OCI-LY7 (cell line): ENCODE measurements at regions of chr4 and their contacts with region 1.

Region 1: GRCh38 chr4:4430492-4431197 is 43.7 kb downstream of the NSG1 start:
- DNase-seq: peak; percentile 86
- H3K4me3 ChIP-seq: no peak overlapping the region
- H3K27ac ChIP-seq: no peak overlapping the region
- H3K4me1 ChIP-seq: peaks cover 24% of the 10 kb centered on the region
- CTCF ChIP-seq: peak; percentile 92

Region 2: GRCh38 chr4:4248029-4248884 is 182.4 kb before region 1 on chr4 and contains the start of gene TMEM128:
- CTCF ChIA-PET with region 1: interaction called, 3 read pairs
- POLR2A ChIA-PET with region 1: no interaction called
- intact Hi-C with region 1: loop called (anchors 2 kb)
- DNase-seq: peak; percentile 94
- H3K4me3 ChIP-seq: peak within 1 kb of the TSS; percentile 95
- H3K27ac ChIP-seq: peak within 1 kb of the TSS; percentile 46
- H3K4me1 ChIP-seq: peaks cover 13% of the 10 kb centered on the region
- CTCF ChIP-seq: peak; percentile 23; the same call in 1 of the 2 replicates
- total RNA-seq, gene TMEM128: 11.2 and 13.9 TPM in 2 replicates

Region 3: DNA sequence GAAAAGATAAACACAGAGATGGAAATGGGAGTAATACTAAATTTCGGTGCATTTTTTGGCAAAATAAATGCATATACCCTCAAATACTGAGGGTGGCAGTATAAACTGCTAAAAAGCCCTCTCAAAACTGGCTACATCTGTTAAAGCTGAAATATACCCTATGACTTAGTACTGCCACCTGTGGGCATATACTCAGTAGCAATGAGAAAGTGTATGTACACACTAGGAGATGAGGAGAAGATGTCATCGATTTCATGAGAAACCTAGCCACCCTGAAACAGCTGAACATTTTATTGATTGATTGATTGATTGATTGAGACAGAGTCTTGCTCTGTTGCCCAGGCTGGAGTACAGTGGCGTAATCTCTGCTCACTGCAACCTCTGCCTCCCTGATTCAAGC is 170.4 kb before region 1 on chr4:
- CTCF ChIA-PET with region 1: interaction called, 4 read pairs
- POLR2A ChIA-PET with region 1: no interaction called
- intact Hi-C with region 1: loop called (anchors 1 kb)
- DNase-seq: peak; percentile 87
- H3K4me3 ChIP-seq: no peak overlapping the region
- H3K27ac ChIP-seq: no peak overlapping the region
- H3K4me1 ChIP-seq: peaks cover 3% of the 10 kb centered on the region
- CTCF ChIP-seq: peak; percentile 97